PC-9 (cell line): ENCODE measurements at regions of chr1 and their contacts with region 1.

Region 1: DNA sequence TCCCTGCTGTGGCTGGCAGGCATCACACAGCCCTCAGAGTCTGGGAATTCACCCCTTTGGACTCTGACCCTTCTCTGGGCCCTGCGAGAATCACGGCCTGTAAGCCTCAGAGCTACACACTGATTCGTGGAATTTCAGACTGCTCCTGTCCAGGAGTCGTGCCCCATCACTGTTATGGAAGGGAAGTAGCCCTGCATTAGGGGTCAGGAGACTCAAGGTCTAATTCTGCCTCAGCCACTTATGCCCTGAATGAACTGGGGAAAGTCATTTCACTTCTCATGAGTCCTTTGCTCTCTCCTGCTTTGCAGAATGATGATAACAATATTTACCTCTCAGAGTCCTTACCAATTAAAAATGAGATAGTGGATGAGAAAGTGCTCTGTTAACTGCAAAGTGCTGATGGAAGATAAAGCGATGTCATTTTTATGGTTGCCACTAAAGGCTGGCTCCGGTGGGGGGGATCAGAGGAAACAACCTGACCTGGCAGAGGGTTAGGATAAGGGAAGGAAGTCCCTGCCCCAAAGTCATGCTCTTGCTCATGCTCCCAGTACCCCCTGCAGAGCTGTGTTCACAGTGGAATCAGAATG is 148.6 kb upstream of the CD34 start:
- DNase-seq: no peak
- H3K4me3 ChIP-seq: no peak overlapping the region
- H3K27ac ChIP-seq: no peak overlapping the region
- H3K4me1 ChIP-seq: no peaks in the 10 kb centered on the region
- H3K27me3 ChIP-seq: no peaks in the 10 kb centered on the region
- CTCF ChIP-seq: no peak

Region 2: DNA sequence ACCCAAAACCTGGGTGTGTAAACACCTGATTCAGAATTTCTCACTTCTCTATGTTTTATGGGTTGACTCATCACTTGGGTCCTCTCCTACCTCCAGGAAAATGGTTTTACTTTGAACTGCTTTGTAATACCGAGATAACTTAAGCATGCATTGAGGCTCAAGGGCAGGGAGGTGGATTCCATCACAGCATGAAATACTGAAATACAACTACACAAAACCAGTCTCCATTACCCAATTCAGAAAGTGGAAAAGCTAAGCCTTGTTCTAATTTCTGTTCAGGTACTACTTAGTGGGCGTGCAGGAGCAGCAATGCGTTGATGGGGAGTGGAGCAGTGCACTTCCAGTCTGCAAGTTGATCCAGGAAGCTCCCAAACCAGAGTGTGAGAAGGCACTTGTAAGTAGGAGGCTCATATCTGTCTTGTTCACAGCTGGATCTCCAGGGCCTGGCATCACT is 961.6 kb before region 1 on chr1:
- CTCF ChIA-PET with region 1: no interaction called
- POLR2A ChIA-PET with region 1: no interaction called
- intact Hi-C with region 1: no loop called
- DNase-seq: peak in 1 of 2 experiments; percentile 70
- H3K4me3 ChIP-seq: no peak overlapping the region
- H3K27ac ChIP-seq: no peak overlapping the region
- H3K4me1 ChIP-seq: peaks cover 10% of the 10 kb centered on the region
- H3K27me3 ChIP-seq: no peaks in the 10 kb centered on the region
- CTCF ChIP-seq: no peak

Region 3: DNA sequence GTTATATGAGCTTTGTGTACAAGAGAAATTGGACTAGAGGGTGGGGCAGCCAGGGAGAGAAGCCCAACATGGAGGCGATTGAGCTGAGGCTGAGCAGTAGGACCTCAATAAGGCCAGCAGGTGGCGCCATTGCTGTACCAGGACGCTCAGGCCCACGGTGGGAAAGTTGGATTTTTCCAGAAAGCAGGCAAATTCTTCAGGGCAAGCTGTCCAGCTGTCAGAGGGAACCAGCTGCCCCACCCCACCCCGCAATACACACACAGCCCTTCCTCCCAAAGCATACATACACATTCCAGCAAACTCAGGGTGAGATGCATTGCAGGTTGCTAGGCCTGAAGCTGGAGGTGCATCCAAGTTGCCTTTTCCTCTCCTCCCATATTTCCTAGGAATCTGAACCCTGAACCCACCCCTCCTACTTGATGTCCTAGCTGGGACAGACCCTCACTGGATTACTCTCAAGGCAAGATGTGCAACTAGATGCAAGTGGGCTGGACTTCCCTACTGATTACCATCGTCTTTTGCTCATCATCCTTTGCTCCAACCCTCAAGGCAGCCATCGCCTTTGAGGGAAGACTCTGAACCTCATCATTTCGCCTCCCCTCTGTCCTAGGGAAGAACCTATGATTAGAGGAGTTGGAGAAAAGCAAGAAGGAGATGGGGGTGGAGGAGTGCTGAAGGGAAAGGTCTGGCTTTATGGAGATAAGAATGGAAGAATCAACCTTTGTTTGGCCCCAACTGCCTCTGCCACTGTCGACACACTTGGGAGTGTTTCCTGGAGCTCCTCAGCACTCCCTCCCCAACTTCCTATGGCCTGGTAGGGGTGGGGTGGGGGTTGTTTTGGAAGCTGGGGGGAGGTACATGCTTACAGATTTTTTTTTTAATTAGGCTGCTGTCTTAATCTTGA is 174.1 kb before region 1 on chr1:
- CTCF ChIA-PET with region 1: no interaction called
- POLR2A ChIA-PET with region 1: no interaction called
- intact Hi-C with region 1: no loop called
- DNase-seq: peak; percentile 50 to 53
- H3K4me3 ChIP-seq: no peak overlapping the region
- H3K27ac ChIP-seq: no peak overlapping the region
- H3K4me1 ChIP-seq: no peaks in the 10 kb centered on the region
- H3K27me3 ChIP-seq: peaks cover 6% of the 10 kb centered on the region
- CTCF ChIP-seq: peak; percentile 91

Region 4: GRCh38 chr1:207941665-207942064 is 117.8 kb before region 1 on chr1:
- CTCF ChIA-PET with region 1: no interaction called
- POLR2A ChIA-PET with region 1: no interaction called
- intact Hi-C with region 1: no loop called
- DNase-seq: no peak
- H3K4me3 ChIP-seq: no peak overlapping the region
- H3K27ac ChIP-seq: no peak overlapping the region
- H3K4me1 ChIP-seq: no peaks in the 10 kb centered on the region
- H3K27me3 ChIP-seq: no peaks in the 10 kb centered on the region; the same call in 1 of the 2 replicates
- CTCF ChIP-seq: no peak

Region 5: GRCh38 chr1:208093754-208094719 is 34.5 kb after region 1 on chr1:
- CTCF ChIA-PET with region 1: no interaction called
- POLR2A ChIA-PET with region 1: no interaction called
- intact Hi-C with region 1: loop called (anchors 5 kb)
- DNase-seq: peak; percentile 51 to 53
- H3K4me3 ChIP-seq: no peak overlapping the region
- H3K27ac ChIP-seq: no peak overlapping the region
- H3K4me1 ChIP-seq: no peaks in the 10 kb centered on the region
- H3K27me3 ChIP-seq: no peaks in the 10 kb centered on the region
- CTCF ChIP-seq: peak; percentile 81

Region 6: GRCh38 chr1:208149776-208150514 is 90.4 kb after region 1 on chr1:
- CTCF ChIA-PET with region 1: no interaction called
- POLR2A ChIA-PET with region 1: no interaction called
- intact Hi-C with region 1: no loop called
- DNase-seq: no peak
- H3K4me3 ChIP-seq: no peak overlapping the region
- H3K27ac ChIP-seq: no peak overlapping the region
- H3K4me1 ChIP-seq: peaks cover 16% of the 10 kb centered on the region
- H3K27me3 ChIP-seq: no peaks in the 10 kb centered on the region
- CTCF ChIP-seq: no peak